AG04450 (cell line): ENCODE measurements at regions of chr1 and their contacts with region 1.

Region 1: DNA sequence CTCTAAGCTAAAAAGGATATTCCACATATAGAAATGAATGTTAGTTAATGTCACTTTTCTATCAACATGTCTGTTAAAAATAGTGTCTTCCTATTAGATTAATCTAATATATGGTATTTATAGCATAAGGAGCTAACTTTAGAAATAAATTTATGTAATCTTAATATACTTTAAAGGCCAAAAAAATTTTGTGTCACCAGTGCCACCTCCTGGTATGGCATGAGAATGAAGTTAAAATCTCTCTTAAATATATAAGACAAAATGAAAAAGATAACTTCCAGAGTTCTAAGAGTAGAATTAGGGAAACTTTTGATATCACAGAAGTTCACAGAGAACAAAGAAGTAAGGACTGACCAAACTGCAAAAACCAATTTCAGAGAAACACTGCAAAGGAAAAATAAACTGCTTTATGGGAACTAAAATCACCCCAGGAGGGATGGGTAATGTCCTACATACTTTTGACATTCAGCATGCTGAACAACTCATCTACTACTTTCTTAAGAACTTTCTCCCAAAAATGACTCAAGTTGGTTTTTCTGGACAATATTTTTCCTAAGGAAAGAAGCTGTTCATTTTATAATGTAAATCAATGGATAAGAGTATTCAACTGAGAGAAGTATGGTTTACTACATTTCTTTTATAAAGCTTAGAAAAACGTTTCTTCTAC is 82.8 kb downstream of the TRIM33 start:
- DNase-seq: no peak
- H3K4me3 ChIP-seq: no peak overlapping the region
- H3K27ac ChIP-seq: no peak overlapping the region
- H3K27me3 ChIP-seq: no peaks in the 10 kb centered on the region
- CTCF ChIP-seq: peak; percentile 56

Region 2: GRCh38 chr1:114440889-114441288 is 12.7 kb after region 1 on chr1:
- CTCF ChIA-PET with region 1: interaction called, 10 read pairs
- POLR2A ChIA-PET with region 1: no interaction called
- DNase-seq: no peak
- H3K4me3 ChIP-seq: no peak overlapping the region
- H3K27ac ChIP-seq: no peak overlapping the region
- H3K27me3 ChIP-seq: no peaks in the 10 kb centered on the region
- CTCF ChIP-seq: no peak